Caco-2 (cell line): ENCODE measurements at regions of chr2 and their contacts with region 1.

Region 1: DNA sequence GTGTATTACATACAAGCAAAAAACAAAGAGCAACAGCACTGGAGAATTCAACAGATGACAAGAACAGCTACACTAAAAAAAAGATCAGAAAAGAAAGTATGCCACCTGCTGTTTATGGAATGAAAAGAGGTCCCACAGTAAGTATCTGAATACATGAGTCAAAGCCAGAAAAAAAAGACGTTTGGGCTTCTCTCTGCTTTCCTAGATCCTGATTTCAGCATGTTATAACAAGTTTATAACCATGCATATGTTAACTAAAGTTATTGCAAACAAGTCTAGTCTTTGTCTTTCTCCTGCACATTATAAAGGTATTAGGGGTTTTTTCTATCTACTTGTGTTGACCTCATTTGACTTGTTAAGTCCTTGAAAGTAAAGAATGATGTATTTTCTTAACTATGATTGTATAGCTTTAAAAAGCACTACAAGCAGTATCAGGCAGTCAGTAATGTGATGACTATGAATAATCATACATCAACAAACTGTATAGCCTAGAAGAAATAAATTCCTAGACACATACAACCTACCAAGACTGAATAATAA is 108.5 kb upstream of the COL5A2 start:
- DNase-seq: peak in 1 of 2 experiments; percentile 60
- H3K4me3 ChIP-seq: no peak overlapping the region
- H3K4me3 Mint-ChIP-seq: no peak overlapping the region
- H3K27ac Mint-ChIP-seq: no peak overlapping the region
- H3K4me1 ChIP-seq: peaks cover 5% of the 10 kb centered on the region; the same call in 1 of the 2 replicates
- H3K4me1 Mint-ChIP-seq: peaks cover 15% of the 10 kb centered on the region
- H3K27me3 ChIP-seq: no peaks in the 10 kb centered on the region
- H3K27me3 Mint-ChIP-seq: no peaks in the 10 kb centered on the region
- CTCF ChIP-seq: peak; percentile 38 to 64

Region 2: DNA sequence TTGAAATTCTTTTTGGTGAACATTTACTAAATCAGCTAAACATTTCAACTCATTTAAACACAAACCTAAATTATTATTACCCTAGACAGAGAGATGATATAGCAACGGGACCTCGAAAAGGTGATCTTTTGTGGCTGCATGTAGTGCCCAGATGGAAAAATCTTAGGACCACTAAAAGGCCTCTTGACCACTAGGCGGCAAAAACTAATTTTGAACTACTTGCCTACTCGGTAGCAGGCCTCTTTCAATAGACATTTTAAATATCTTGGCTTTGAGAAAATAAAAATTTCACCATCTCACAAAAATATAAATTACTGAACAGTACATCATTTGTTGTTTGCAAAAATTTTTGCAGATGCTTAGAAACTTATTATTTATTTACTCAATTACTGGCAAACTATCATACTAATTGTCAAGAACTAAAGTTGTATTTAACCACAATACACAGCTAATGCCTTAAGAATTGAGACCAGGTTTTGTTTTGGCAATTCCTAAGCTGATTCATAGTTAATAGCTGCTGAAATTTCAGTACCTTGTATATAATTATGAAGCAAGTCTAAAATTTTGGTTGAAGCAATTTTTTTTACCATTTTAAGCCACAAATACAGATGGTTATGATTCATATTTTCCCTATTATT is 304.5 kb before region 1 on chr2:
- CTCF ChIA-PET with region 1: no interaction called
- POLR2A ChIA-PET with region 1: no interaction called
- intact Hi-C with region 1: loop called (anchors 1 kb)
- DNase-seq: peak in 1 of 2 experiments; percentile 42
- H3K4me3 ChIP-seq: no peak overlapping the region
- H3K4me3 Mint-ChIP-seq: no peak overlapping the region
- H3K27ac Mint-ChIP-seq: no peak overlapping the region
- H3K4me1 ChIP-seq: peaks cover 4% of the 10 kb centered on the region; the same call in 1 of the 2 replicates
- H3K4me1 Mint-ChIP-seq: peaks cover 7% of the 10 kb centered on the region
- H3K27me3 ChIP-seq: no peaks in the 10 kb centered on the region
- H3K27me3 Mint-ChIP-seq: no peaks in the 10 kb centered on the region
- CTCF ChIP-seq: peak; percentile 63 to 67

Region 3: DNA sequence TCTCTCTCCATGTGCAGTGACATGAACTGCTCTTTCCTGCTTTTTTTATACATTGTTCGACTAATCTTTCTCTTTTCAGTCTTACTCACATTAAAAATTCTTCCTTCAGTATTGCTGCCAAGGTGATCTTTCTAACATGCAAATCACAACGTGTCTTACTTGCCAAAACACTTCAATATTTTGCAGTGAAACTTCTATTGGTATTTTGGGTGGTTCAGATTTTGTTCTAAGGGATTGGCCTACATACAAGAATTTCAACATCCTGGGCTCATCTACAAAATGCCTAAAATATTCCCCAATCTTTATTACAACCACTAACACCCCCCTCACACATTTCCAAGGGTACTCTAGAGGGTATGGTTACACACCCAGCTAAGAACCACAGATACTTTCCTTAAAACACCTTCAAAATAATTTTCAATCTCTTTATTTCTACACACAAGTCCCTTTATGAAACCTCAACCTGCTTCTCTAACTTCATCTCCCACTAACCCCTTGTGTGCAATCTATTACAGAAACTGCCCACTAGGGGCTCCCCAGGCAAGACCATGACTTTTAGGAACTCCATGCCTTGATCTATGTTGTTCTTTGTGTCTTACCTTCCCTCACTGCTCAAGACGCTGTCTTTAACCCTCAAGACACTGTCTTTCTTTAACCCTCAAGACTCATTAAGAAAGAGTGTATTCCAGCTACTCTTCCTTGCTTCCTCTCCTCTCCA is 263.0 kb before region 1 on chr2:
- CTCF ChIA-PET with region 1: no interaction called
- POLR2A ChIA-PET with region 1: no interaction called
- intact Hi-C with region 1: loop called (anchors 10 kb)
- DNase-seq: peak in 1 of 2 experiments; percentile 26
- H3K4me3 ChIP-seq: no peak overlapping the region
- H3K4me3 Mint-ChIP-seq: no peak overlapping the region
- H3K27ac Mint-ChIP-seq: no peak overlapping the region
- H3K4me1 ChIP-seq: no peaks in the 10 kb centered on the region
- H3K4me1 Mint-ChIP-seq: no peaks in the 10 kb centered on the region
- H3K27me3 ChIP-seq: no peaks in the 10 kb centered on the region
- H3K27me3 Mint-ChIP-seq: no peaks in the 10 kb centered on the region
- CTCF ChIP-seq: peak; percentile 71 to 73

Region 4: DNA sequence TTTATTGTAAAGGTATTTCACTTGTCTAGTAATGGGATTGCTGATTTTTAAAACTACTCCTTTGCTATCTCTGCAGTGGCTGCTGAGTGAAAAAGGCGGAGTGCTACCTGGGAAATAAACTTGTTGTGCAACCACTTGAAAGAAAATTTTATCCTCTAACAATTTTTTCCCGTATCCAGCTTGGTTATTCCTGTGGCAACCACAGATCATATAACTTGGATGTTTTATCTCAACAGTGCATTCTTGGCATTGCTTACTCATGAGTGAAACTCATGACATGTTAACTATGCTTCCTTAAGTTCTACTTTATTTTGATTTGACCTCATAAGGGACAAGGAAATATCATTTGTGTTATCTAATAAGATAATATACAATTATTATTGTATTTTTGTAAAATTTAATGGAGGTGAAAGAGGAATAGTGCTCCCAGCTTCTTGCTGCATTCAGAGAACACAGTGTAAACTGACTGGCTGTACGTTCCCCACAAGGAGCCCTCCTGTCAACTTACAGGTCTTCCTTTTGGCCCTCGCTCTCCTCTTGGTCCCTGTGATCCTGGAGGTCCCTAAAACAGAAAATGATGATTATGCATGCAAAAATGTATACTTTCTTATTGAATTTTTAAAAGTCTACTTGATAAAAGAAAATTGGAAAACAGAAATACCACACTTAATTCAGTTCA is 191.1 kb before region 1 on chr2:
- CTCF ChIA-PET with region 1: interaction called, 9 read pairs
- POLR2A ChIA-PET with region 1: no interaction called
- intact Hi-C with region 1: loop called (anchors 1 kb)
- DNase-seq: peak in 1 of 2 experiments; percentile 52
- H3K4me3 ChIP-seq: no peak overlapping the region
- H3K4me3 Mint-ChIP-seq: no peak overlapping the region
- H3K27ac Mint-ChIP-seq: peak overlapping the region; percentile 70
- H3K4me1 ChIP-seq: peaks cover 19% of the 10 kb centered on the region
- H3K4me1 Mint-ChIP-seq: peaks cover 21% of the 10 kb centered on the region
- H3K27me3 ChIP-seq: no peaks in the 10 kb centered on the region
- H3K27me3 Mint-ChIP-seq: no peaks in the 10 kb centered on the region
- CTCF ChIP-seq: no peak

Region 5: GRCh38 chr2:189142893-189143759 is 144.9 kb before region 1 on chr2:
- CTCF ChIA-PET with region 1: interaction called, 28 read pairs
- POLR2A ChIA-PET with region 1: no interaction called
- intact Hi-C with region 1: loop called (anchors 1 kb)
- DNase-seq: peak; percentile 75 to 80
- H3K4me3 ChIP-seq: no peak overlapping the region
- H3K4me3 Mint-ChIP-seq: no peak overlapping the region
- H3K27ac Mint-ChIP-seq: peak overlapping the region; percentile 17
- H3K4me1 ChIP-seq: peaks cover 12% of the 10 kb centered on the region
- H3K4me1 Mint-ChIP-seq: peaks cover 20% of the 10 kb centered on the region
- H3K27me3 ChIP-seq: no peaks in the 10 kb centered on the region
- H3K27me3 Mint-ChIP-seq: no peaks in the 10 kb centered on the region
- CTCF ChIP-seq: peak; percentile 93 to 99

Region 6: DNA sequence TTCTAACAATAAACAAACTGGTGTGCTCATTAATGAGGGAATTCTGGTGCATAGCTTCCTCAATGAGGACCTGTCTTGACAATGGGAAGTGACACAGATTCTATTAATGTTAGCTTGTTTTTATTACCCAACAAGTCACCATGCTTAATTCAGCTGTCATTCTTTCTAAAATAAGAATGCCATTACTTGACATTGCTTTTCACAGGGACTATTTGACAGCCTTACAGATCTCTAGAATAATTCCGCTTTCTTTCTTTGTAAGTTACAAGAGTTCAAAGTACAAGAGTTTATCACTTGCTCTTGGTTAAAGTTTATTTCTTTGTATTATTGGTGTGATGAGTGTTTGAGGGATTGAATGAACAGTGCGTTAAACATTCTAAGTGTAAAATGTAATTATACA is 18.5 kb after region 1 on chr2:
- CTCF ChIA-PET with region 1: no interaction called
- POLR2A ChIA-PET with region 1: no interaction called
- intact Hi-C with region 1: loop called (anchors 1 kb)
- DNase-seq: no peak
- H3K4me3 ChIP-seq: no peak overlapping the region
- H3K4me3 Mint-ChIP-seq: no peak overlapping the region
- H3K27ac Mint-ChIP-seq: no peak overlapping the region
- H3K4me1 ChIP-seq: peaks cover 47% of the 10 kb centered on the region
- H3K4me1 Mint-ChIP-seq: peaks cover 38% of the 10 kb centered on the region
- H3K27me3 ChIP-seq: no peaks in the 10 kb centered on the region
- H3K27me3 Mint-ChIP-seq: no peaks in the 10 kb centered on the region
- CTCF ChIP-seq: no peak